ENCODE measurements at regions of chr1 and their contacts with region 1.

Region 1: DNA sequence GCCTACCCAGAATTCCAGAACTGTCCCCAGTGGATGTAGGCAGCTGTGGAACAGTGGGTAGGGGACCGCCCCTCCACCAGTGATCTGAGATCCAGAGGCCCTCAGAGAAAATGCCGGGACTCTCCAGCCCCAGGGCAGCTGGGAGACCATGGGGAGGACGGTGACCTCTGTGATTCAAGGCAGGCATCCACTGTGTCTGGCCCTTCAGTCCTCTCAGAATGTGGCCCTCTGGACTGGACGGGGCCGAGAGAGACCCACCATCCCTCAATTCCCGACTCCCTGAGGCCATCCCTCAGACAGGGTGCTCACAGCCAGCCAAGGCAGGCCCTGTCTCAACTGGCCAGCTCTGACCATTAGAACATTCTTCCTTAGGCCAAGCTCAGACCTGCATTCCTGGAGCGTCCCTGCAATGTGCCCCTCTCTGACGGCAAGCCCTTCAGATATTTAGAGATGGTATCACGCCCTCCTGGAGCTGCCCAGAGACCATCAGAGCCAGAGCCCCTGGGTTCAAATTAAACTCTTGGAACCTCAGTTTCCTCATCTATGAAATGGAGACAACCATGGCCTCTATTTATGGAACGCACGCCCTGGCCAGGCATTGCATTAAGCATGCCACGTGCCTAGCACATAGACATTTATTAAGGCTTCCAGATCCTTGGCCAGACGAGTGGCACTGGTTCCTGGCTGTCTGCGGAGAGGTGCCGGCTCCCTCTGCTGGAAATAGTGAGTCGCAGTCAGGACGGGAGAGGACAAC is 9.6 kb upstream of the EPS8L3 start:
- DNase-seq: peak; percentile 87
- CTCF ChIP-seq: peak; percentile 91

Region 2: DNA sequence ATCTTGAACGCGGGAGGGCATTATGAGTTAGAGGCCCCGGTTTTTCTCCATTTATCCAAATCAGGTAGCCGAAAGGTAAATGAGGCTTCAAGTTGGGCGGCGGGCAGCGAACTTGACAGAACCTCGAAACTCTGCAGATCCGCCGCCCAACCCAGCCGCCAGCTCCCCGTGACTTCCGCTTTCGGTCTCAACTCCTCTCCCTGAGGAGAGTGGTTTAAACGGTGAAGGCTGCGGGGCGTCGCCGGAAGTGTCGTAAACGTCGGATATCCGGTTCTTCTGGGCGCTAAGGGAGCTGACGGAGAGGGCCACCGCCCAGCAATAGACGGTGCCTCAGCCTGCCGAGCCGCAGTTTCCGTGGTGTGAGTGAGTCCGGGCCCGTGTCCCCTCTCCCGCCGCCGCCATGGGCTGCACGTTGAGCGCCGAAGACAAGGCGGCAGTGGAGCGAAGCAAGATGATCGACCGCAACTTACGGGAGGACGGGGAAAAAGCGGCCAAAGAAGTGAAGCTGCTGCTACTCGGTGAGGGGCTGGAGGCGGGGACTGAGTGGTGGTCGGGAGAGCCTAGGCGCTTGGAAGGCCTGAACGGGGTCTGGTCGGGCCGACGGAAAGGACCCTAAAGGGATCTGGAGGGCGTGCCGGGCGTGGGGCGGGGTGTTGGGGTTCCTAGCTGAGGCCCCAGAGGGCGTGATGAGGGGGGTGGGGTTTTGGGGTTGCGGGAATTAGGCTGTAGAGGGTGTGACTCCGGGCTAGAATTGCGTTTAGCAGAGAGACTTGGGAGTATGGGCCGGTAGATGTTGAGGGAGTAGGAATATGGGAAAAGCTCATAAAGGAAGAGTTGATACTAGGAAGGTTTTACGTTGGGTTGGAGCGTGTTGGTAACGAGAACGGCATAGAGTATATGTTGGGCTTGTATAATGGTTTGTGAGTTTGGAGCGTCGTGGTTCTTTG is 224.7 kb before region 1 on chr1 and contains the start of gene GNAI3:
- CTCF ChIA-PET with region 1: interaction called, 74 read pairs
- POLR2A ChIA-PET with region 1: no interaction called
- DNase-seq: peak; percentile 95
- CTCF ChIP-seq: no peak

Region 3: GRCh38 chr1:109655601-109656519 is 117.5 kb before region 1 on chr1 and contains the start of gene GSTM4:
- CTCF ChIA-PET with region 1: interaction called, 17 read pairs
- POLR2A ChIA-PET with region 1: no interaction called
- DNase-seq: peak; percentile 91
- CTCF ChIP-seq: no peak

Region 4: GRCh38 chr1:109704173-109704572 is 69.2 kb before region 1 on chr1:
- CTCF ChIA-PET with region 1: no interaction called
- POLR2A ChIA-PET with region 1: no interaction called
- DNase-seq: no peak
- CTCF ChIP-seq: no peak

Region 5: GRCh38 chr1:109762821-109763645 is 10.3 kb before region 1 on chr1:
- CTCF ChIA-PET with region 1: interaction called, 37 read pairs
- POLR2A ChIA-PET with region 1: no interaction called
- DNase-seq: no peak
- CTCF ChIP-seq: no peak

Region 6: GRCh38 chr1:109807822-109808680 is 34.7 kb after region 1 on chr1:
- CTCF ChIA-PET with region 1: interaction called, 24 read pairs
- POLR2A ChIA-PET with region 1: no interaction called
- DNase-seq: no peak
- CTCF ChIP-seq: no peak

Region 7: GRCh38 chr1:109984456-109985275 is 211.3 kb after region 1 on chr1 and contains the start of gene AHCYL1:
- CTCF ChIA-PET with region 1: interaction called, 737 read pairs
- POLR2A ChIA-PET with region 1: interaction called, 5 read pairs
- DNase-seq: peak; percentile 100
- CTCF ChIP-seq: peak; percentile 96

Region 8: GRCh38 chr1:110011527-110012041 is 238.3 kb after region 1 on chr1:
- CTCF ChIA-PET with region 1: interaction called, 78 read pairs
- POLR2A ChIA-PET with region 1: no interaction called
- DNase-seq: peak; percentile 80
- CTCF ChIP-seq: peak; percentile 50

Measured in GM10248 (cell line).